Endothelial cell of umbilical vein (primary cell): ENCODE measurements at regions of chr4 and their contacts with region 1.

Region 1: GRCh38 chr4:75849461-75849860 is 52.8 kb downstream of the PPEF2 start:
- DNase-seq: peak; percentile 68
- H3K4me3 ChIP-seq: no peak overlapping the region
- H3K27ac ChIP-seq: no peak overlapping the region
- H3K4me1 ChIP-seq: peaks cover 11% of the 10 kb centered on the region
- H3K27me3 ChIP-seq: no peaks in the 10 kb centered on the region
- CTCF ChIP-seq: peak in 1 of 2 donors; percentile 10
- POLR2A ChIP-seq: no peak

Region 2: GRCh38 chr4:75432683-75433082 is 416.8 kb before region 1 on chr4:
- CTCF ChIA-PET with region 1: interaction called, 9 read pairs
- POLR2A ChIA-PET with region 1: no interaction called
- dilution Hi-C with region 1: no loop called
- intact Hi-C with region 1: loop called (anchors 5 kb)
- DNase-seq: peak; percentile 19
- H3K4me3 ChIP-seq: no peak overlapping the region
- H3K27ac ChIP-seq: no peak overlapping the region
- H3K4me1 ChIP-seq: no peaks in the 10 kb centered on the region
- H3K27me3 ChIP-seq: peaks cover 0 to 4% of the 10 kb centered on the region in 2 experiments
- CTCF ChIP-seq: peak; percentile 27 to 54
- POLR2A ChIP-seq: no peak

Region 3: DNA sequence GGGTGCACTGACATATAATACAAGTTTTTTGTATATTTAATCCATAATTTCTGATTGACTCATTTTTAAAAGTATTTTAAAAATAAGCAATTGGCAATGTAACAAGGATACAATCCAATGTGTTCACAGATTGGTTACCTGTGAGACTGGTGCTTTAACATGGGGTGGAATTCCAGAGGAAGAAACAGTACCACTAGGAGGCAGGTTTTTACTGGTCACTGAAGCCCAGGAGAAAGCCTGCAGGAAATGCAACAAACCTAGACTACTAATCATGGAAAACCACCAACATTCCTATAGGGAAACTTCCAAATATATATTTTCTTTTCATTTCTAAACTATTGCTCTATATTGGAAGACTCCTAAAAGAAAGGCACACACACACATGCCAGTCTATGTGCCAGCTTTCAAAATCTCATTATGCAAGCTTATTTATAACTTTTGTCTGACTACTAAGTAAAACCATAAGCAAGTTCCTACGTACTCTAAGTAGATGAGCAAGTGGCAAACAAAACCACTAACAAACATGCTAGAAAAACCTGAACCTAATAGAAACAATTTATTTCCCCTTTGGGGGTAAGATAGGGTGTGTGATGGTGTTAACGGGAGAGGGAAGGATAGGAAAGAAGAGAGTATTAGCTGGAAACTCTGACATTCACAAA is 195.5 kb before region 1 on chr4:
- CTCF ChIA-PET with region 1: interaction called, 14 read pairs
- POLR2A ChIA-PET with region 1: no interaction called
- dilution Hi-C with region 1: no loop called
- intact Hi-C with region 1: loop called (anchors 1 kb)
- DNase-seq: peak; percentile 61
- H3K4me3 ChIP-seq: no peak overlapping the region
- H3K27ac ChIP-seq: no peak overlapping the region
- H3K4me1 ChIP-seq: peaks cover 4% of the 10 kb centered on the region
- H3K27me3 ChIP-seq: no peaks in the 10 kb centered on the region
- CTCF ChIP-seq: peak; percentile 38 to 49
- POLR2A ChIP-seq: no peak

Region 4: GRCh38 chr4:75724066-75724866 is 125.2 kb before region 1 on chr4 and contains the start of gene USO1:
- CTCF ChIA-PET with region 1: interaction called, 15 read pairs
- POLR2A ChIA-PET with region 1: interaction called, 3 read pairs
- dilution Hi-C with region 1: no loop called
- intact Hi-C with region 1: loop called (anchors 1 kb)
- DNase-seq: peak; percentile 100
- H3K4me3 ChIP-seq: peak within 1 kb of the TSS; percentile 81 to 94 (median 86)
- H3K27ac ChIP-seq: peak within 1 kb of the TSS; percentile 89
- H3K4me1 ChIP-seq: peaks cover 28% of the 10 kb centered on the region
- H3K27me3 ChIP-seq: no peaks in the 10 kb centered on the region
- CTCF ChIP-seq: peak; percentile 73 to 82
- POLR2A ChIP-seq: peak; percentile 97
- total RNA-seq, gene USO1: 60.2 and 66.0 TPM in 2 replicates

Region 5: GRCh38 chr4:75831856-75832405 is 17.5 kb before region 1 on chr4:
- CTCF ChIA-PET with region 1: interaction called, 24 read pairs
- POLR2A ChIA-PET with region 1: no interaction called
- dilution Hi-C with region 1: no loop called
- intact Hi-C with region 1: no loop called
- DNase-seq: no peak
- H3K4me3 ChIP-seq: no peak overlapping the region
- H3K27ac ChIP-seq: no peak overlapping the region
- H3K4me1 ChIP-seq: no peaks in the 10 kb centered on the region
- H3K27me3 ChIP-seq: peaks cover 0 to 2% of the 10 kb centered on the region in 2 experiments
- CTCF ChIP-seq: no peak
- POLR2A ChIP-seq: no peak